ENCODE measurements at regions of chr15 and their contacts with region 1.

Region 1: GRCh38 chr15:74635228-74635627 is 19.6 kb downstream of the CLK3 start:
- DNase-seq: peak; percentile 63 to 87 (median 70)
- ATAC-seq: peak; percentile 97
- H3K4me3 ChIP-seq: no peak overlapping the region
- H3K4me3 Mint-ChIP-seq: no peak overlapping the region
- H3K27ac ChIP-seq: no peak overlapping the region
- H3K27ac Mint-ChIP-seq: no peak overlapping the region
- H3K4me1 ChIP-seq: peaks cover 5% of the 10 kb centered on the region
- H3K4me1 Mint-ChIP-seq: no peaks in the 10 kb centered on the region
- H3K27me3 ChIP-seq: no peaks in the 10 kb centered on the region
- H3K27me3 Mint-ChIP-seq: no peaks in the 10 kb centered on the region
- CTCF ChIP-seq: peak; percentile 85

Region 2: GRCh38 chr15:74604983-74605794 is 30.0 kb before region 1 on chr15:
- CTCF ChIA-PET with region 1: no interaction called
- POLR2A ChIA-PET with region 1: no interaction called
- intact Hi-C with region 1: no loop called
- DNase-seq: no peak
- ATAC-seq: no peak
- H3K4me3 ChIP-seq: no peak overlapping the region
- H3K4me3 Mint-ChIP-seq: no peak overlapping the region
- H3K27ac ChIP-seq: no peak overlapping the region
- H3K27ac Mint-ChIP-seq: no peak overlapping the region
- H3K4me1 ChIP-seq: no peaks in the 10 kb centered on the region
- H3K4me1 Mint-ChIP-seq: no peaks in the 10 kb centered on the region
- H3K27me3 ChIP-seq: no peaks in the 10 kb centered on the region
- H3K27me3 Mint-ChIP-seq: no peaks in the 10 kb centered on the region
- CTCF ChIP-seq: no peak

Region 3: GRCh38 chr15:74620636-74621545 is 14.3 kb before region 1 on chr15:
- CTCF ChIA-PET with region 1: interaction called, 34 read pairs
- POLR2A ChIA-PET with region 1: interaction called, 3 read pairs
- intact Hi-C with region 1: no loop called
- DNase-seq: peak; percentile 48 to 89 (median 67)
- ATAC-seq: peak; percentile 89
- H3K4me3 ChIP-seq: no peak overlapping the region
- H3K4me3 Mint-ChIP-seq: peak overlapping the region; percentile 78
- H3K27ac ChIP-seq: no peak overlapping the region
- H3K27ac Mint-ChIP-seq: peak overlapping the region; percentile 67
- H3K4me1 ChIP-seq: peaks cover 64% of the 10 kb centered on the region
- H3K4me1 Mint-ChIP-seq: peaks cover 49% of the 10 kb centered on the region
- H3K27me3 ChIP-seq: no peaks in the 10 kb centered on the region
- H3K27me3 Mint-ChIP-seq: no peaks in the 10 kb centered on the region
- CTCF ChIP-seq: peak; percentile 86

Region 4: GRCh38 chr15:74835307-74835823 is 200.1 kb after region 1 on chr15:
- CTCF ChIA-PET with region 1: no interaction called
- POLR2A ChIA-PET with region 1: no interaction called
- intact Hi-C with region 1: loop called in 1 of 2 experiments (anchors 10 kb)
- DNase-seq: peak in 13 of 14 experiments; percentile 19 to 64 (median 40)
- ATAC-seq: peak; percentile 72
- H3K4me3 ChIP-seq: no peak overlapping the region
- H3K4me3 Mint-ChIP-seq: no peak overlapping the region
- H3K27ac ChIP-seq: no peak overlapping the region
- H3K27ac Mint-ChIP-seq: no peak overlapping the region
- H3K4me1 ChIP-seq: peaks cover under 1% of the 10 kb centered on the region
- H3K4me1 Mint-ChIP-seq: no peaks in the 10 kb centered on the region
- H3K27me3 ChIP-seq: no peaks in the 10 kb centered on the region
- H3K27me3 Mint-ChIP-seq: no peaks in the 10 kb centered on the region
- CTCF ChIP-seq: peak; percentile 81

Region 5: GRCh38 chr15:74950078-74951000 is 315.1 kb after region 1 on chr15:
- CTCF ChIA-PET with region 1: interaction called, 7 read pairs
- POLR2A ChIA-PET with region 1: no interaction called
- intact Hi-C with region 1: loop called (anchors 1 kb)
- DNase-seq: peak; percentile 58 to 87 (median 76)
- ATAC-seq: peak; percentile 96
- H3K4me3 ChIP-seq: no peak overlapping the region
- H3K4me3 Mint-ChIP-seq: no peak overlapping the region
- H3K27ac ChIP-seq: no peak overlapping the region
- H3K27ac Mint-ChIP-seq: no peak overlapping the region
- H3K4me1 ChIP-seq: peaks cover 4% of the 10 kb centered on the region
- H3K4me1 Mint-ChIP-seq: peaks cover 5% of the 10 kb centered on the region
- H3K27me3 ChIP-seq: peaks cover 0 to 6% of the 10 kb centered on the region in 2 experiments
- H3K27me3 Mint-ChIP-seq: no peaks in the 10 kb centered on the region
- CTCF ChIP-seq: peak; percentile 97